AG04449 (cell line): ENCODE measurements at regions of chr16 and their contacts with region 1.

Region 1: GRCh38 chr16:2963723-2964474 is at the start of gene KREMEN2:
- DNase-seq: no peak
- H3K4me3 ChIP-seq: peak within 1 kb of the TSS; percentile 37
- CTCF ChIP-seq: no peak

Region 2: GRCh38 chr16:2854700-2855309 is 109.1 kb before region 1 on chr16:
- CTCF ChIA-PET with region 1: no interaction called
- POLR2A ChIA-PET with region 1: no interaction called
- DNase-seq: no peak
- H3K4me3 ChIP-seq: no peak overlapping the region
- CTCF ChIP-seq: peak; percentile 6

Region 3: DNA sequence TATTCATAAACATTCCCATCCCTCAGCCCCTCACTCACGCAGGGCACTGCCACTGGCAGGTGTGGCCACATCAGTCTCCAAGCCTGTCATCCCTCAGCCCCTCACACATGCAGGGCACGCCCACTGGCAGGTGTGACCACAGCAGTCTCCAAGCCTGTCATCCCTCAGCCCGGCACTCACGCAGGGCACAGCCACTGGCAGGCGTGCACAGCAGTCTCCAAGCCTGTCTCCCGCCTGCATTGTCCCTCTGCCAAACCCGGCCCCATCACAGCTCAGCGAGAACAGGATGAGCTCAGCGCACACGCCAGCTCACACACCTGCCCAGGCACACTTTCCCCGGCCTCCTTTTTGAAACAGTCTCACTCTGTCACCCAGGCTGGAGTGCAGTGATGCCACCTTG is 11.2 kb before region 1 on chr16:
- CTCF ChIA-PET with region 1: interaction called, 15 read pairs
- POLR2A ChIA-PET with region 1: no interaction called
- DNase-seq: no peak
- H3K4me3 ChIP-seq: no peak overlapping the region
- CTCF ChIP-seq: no peak

Region 4: GRCh38 chr16:4800290-4801041 is 1836.6 kb after region 1 on chr16:
- CTCF ChIA-PET with region 1: no interaction called
- POLR2A ChIA-PET with region 1: no interaction called
- DNase-seq: no peak
- H3K4me3 ChIP-seq: no peak overlapping the region
- CTCF ChIP-seq: no peak